ENCODE measurements at regions of chr15 and their contacts with region 1.

Region 1: DNA sequence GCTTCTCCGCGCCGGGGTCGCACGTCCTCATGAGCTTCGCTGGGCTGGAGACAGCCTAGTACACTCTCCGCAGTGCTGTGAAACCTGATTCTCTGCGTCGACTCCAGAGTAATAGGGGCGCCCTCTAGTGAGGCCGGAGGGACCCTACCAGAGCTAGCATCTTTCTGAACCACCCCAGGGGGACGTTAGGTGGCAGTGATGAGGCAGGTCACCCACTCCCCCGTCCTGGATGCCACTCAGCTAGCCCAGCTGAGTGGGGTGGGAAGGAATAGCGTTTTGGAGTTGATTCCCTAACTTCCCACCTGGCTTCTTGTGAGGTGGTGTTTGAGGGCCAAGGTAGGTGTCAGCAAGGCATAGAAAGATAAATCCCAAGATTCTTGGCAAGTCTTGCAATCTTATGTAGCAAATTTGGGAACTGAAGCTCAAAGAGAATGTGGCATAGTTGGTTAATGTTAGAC is 4.0 kb downstream of the DUOXA2 start:
- DNase-seq: peak; percentile 92
- CTCF ChIP-seq: peak; percentile 99

Region 2: GRCh38 chr15:43958861-43959330 is 1159.3 kb before region 1 on chr15:
- CTCF ChIA-PET with region 1: no interaction called
- POLR2A ChIA-PET with region 1: no interaction called
- DNase-seq: no peak
- CTCF ChIP-seq: no peak

Region 3: DNA sequence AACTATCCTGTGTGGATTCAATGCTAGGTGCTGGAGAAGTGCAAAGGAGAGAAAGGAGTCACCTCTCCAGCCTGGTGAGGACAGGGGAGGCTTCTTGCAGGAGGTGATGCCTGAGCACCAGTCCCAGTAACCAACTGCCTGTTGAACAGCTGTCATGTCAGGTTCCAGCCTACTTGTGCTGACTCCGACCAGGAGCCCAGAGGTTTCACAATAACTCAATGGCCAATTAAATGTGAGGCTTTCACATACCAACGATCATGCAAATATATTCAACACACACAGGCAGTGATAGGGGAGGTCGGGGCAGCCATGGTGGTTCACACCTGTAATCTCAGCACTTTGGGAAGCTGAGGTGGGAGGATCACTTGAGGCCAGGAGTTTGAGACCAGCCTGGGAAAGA is 87.4 kb before region 1 on chr15:
- CTCF ChIA-PET with region 1: interaction called, 13 read pairs
- POLR2A ChIA-PET with region 1: no interaction called
- DNase-seq: no peak
- CTCF ChIP-seq: no peak

Region 4: DNA sequence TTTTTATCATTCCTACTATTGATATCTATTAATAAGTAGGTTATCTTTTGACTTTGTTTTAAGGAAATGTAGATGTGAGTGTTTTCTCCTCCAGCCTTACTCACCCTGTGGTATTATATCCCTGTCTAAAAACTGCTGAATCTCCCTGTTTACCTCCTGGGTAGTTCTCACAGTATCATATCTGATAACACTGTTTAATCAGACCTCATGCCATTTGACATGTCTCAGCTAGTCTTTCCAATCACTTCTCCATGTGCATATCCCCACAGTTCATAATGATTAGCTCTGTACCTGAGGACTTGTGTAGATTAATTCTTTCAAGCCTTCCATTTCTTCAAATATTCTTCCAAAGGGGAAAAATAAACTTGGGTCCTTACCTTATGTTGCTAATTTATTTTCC is 34.9 kb before region 1 on chr15:
- CTCF ChIA-PET with region 1: interaction called, 12 read pairs
- POLR2A ChIA-PET with region 1: interaction called, 3 read pairs
- DNase-seq: no peak
- CTCF ChIP-seq: no peak

Region 5: DNA sequence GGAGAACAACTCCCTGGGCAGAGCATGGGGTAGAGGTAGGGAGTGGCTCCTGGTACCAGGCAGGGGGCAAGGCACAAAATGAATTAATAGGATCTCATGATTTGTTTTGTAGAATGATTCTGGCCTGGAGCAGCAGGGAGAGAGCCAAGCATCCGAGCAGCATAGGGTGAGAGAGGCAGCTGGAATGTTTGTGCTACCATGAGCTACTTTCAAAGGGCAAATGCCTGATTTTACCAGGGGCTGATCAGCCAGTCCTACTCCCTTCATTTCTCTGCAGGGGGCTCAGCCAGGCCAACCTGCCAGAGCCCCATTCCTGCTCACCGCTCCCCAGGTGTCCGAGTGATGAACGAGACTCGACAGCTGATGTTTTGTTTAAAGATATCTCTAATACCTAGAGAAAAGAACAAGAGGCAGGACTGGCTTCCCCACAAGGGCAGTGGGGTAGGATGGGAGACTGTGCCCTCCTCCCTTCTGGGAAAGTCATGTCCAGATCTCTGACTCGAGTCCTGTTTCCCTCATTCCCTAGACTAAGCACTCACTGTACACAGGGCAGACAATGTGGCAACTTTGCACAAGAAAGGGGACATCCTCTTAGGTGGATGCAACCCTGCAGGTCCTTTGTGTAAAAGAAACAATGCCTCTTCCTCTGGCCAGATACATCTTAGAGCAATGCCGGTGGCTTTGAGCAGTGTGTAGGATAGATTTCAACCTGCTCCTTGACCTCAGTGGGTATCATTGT is 17.1 kb before region 1 on chr15:
- CTCF ChIA-PET with region 1: interaction called, 39 read pairs
- POLR2A ChIA-PET with region 1: no interaction called
- DNase-seq: no peak
- CTCF ChIP-seq: no peak

Region 6: DNA sequence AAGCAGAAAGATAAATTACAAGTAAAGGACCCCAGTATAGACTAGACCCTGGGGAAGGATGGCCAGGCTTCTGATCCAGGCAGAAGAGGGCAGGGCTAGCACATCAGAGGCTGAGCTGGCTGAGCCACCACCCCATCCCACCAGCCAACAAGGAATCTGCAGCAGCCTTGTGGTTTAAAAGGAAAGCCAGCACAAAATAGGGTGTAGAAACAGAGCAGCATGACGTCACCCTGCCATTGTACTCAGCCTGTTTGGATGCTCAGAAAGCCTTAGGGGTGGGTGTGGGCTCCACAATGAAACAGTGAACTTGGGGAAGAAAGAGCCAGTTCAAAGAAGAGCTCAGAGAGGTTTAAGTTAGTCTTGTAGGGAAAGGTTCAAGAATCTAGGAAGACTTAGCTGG is 39.8 kb after region 1 on chr15:
- CTCF ChIA-PET with region 1: interaction called, 26 read pairs
- POLR2A ChIA-PET with region 1: no interaction called
- DNase-seq: no peak
- CTCF ChIP-seq: no peak

Measured in GM10248 (cell line).